Sigmoid colon (tissue), 7 donors: ENCODE measurements at regions of chr4 and their contacts with region 1.

Region 1: GRCh38 chr4:24584175-24584850 is at the start of gene DHX15:
- DNase-seq: peak; percentile 98
- H3K4me3 ChIP-seq: peak within 1 kb of the TSS; percentile 74 to 100 (median 94)
- H3K27ac ChIP-seq: peak within 1 kb of the TSS; percentile 98 to 100 (median 100)
- H3K4me1 ChIP-seq: peaks cover 0 to 44% (median 36%) of the 10 kb centered on the region in 4 donors
- H3K27me3 ChIP-seq: no peaks in the 10 kb centered on the region
- CTCF ChIP-seq: no peak
- EP300 ChIP-seq: no peak
- POLR2A ChIP-seq: peak in 1 of 2 donors; percentile 59
- total RNA-seq, gene DHX15: 103 to 136 (median 113) TPM

Region 2: GRCh38 chr4:24472514-24473308 is 111.6 kb before region 1 on chr4:
- intact Hi-C with region 1: loop called (anchors 2 kb)
- DNase-seq: peak; percentile 95
- H3K4me3 ChIP-seq: peak overlapping the region; percentile 50 to 61 (median 55)
- H3K27ac ChIP-seq: peak overlapping the region; percentile 64 to 89 (median 74)
- H3K4me1 ChIP-seq: peaks cover 0 to 33% (median 29%) of the 10 kb centered on the region in 4 donors
- H3K27me3 ChIP-seq: peaks cover 0 to 16% (median 4%) of the 10 kb centered on the region in 3 donors
- CTCF ChIP-seq: peak; percentile 16 to 74 (median 54)
- EP300 ChIP-seq: peak in 1 of 4 donors; percentile 4
- POLR2A ChIP-seq: no peak

Region 3: GRCh38 chr4:24794916-24795665 is 210.8 kb after region 1 on chr4 and contains the start of gene SOD3:
- intact Hi-C with region 1: loop called (anchors 5 kb)
- DNase-seq: peak; percentile 95
- H3K4me3 ChIP-seq: peak within 1 kb of the TSS; percentile 5 to 47 (median 37)
- H3K27ac ChIP-seq: peak within 1 kb of the TSS; percentile 80 to 89 (median 86)
- H3K4me1 ChIP-seq: peaks cover 0 to 42% (median 31%) of the 10 kb centered on the region in 4 donors
- H3K27me3 ChIP-seq: peaks cover 0 to 9% (median 0%) of the 10 kb centered on the region in 3 donors
- CTCF ChIP-seq: no peak
- EP300 ChIP-seq: no peak
- POLR2A ChIP-seq: peak in 1 of 2 donors; percentile 69
- total RNA-seq, gene SOD3: 45.3 to 164 (median 95.4) TPM

Region 4: GRCh38 chr4:24912252-24913118 is 328.2 kb after region 1 on chr4 and contains the start of gene CCDC149:
- intact Hi-C with region 1: loop called (anchors 2 kb)
- DNase-seq: peak; percentile 84
- H3K4me3 ChIP-seq: peak within 1 kb of the TSS; percentile 36 to 93 (median 80)
- H3K27ac ChIP-seq: peak within 1 kb of the TSS; percentile 87 to 95 (median 92)
- H3K4me1 ChIP-seq: peaks cover 0 to 23% (median 11%) of the 10 kb centered on the region in 4 donors
- H3K27me3 ChIP-seq: no peaks in the 10 kb centered on the region
- CTCF ChIP-seq: no peak
- EP300 ChIP-seq: no peak
- POLR2A ChIP-seq: no peak
- total RNA-seq, gene CCDC149: 11.8 to 21.3 (median 16.5) TPM

Region 5: DNA sequence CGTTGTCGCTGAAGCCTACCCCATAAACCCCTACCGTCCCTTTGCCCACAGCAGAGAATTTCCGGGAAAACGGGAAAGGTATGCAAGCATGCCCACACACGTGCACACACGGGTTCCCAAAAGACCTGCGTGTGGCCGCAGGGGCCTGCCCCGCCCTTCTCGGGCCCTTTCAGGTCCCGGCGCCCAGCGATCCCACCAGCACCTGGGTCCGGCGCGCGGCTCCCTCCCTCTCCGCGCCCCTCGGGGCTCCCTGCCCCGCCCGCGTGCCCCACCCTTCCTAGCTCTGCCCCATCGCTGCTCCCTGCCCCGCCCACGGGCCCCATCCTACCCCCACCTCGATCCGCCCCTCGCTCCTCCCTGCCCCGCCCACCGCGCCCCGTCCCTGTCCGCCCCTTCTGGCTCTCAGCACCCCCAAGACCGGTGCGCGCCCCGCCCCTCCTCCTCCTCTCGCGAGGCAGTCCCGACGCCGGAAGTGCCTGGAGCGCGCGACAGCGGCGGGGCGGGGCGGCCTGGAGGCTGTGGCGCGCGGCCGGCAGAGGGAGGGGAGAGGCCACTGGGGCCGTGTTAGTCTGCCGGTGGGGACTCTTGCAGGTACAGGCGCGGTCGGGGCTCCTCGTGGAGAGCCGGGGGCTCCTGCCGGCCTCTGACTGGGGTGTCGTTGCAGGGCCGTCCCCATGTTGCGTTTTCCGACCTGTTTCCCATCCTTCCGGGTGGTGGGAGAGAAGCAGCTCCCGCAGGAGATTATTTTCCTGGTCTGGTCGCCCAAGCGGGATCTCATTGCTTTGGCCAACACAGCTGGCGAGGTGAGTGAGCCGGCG is 792.6 kb after region 1 on chr4 and contains the start of gene ANAPC4:
- intact Hi-C with region 1: loop called (anchors 10 kb)
- DNase-seq: peak; percentile 98
- H3K4me3 ChIP-seq: peak within 1 kb of the TSS; percentile 67 to 94 (median 74)
- H3K27ac ChIP-seq: peak within 1 kb of the TSS; percentile 77 to 83 (median 80)
- H3K4me1 ChIP-seq: peaks cover 0 to 22% (median 19%) of the 10 kb centered on the region in 4 donors
- H3K27me3 ChIP-seq: no peaks in the 10 kb centered on the region
- CTCF ChIP-seq: peak in 2 of 4 experiments; percentile 13 to 14
- EP300 ChIP-seq: peak in 1 of 4 donors; percentile 6
- POLR2A ChIP-seq: peak in 1 of 2 donors; percentile 57
- total RNA-seq, gene ANAPC4: 31.4 to 75.1 (median 34.5) TPM